ENCODE measurements at regions of chr22 and their contacts with region 1.

Region 1: DNA sequence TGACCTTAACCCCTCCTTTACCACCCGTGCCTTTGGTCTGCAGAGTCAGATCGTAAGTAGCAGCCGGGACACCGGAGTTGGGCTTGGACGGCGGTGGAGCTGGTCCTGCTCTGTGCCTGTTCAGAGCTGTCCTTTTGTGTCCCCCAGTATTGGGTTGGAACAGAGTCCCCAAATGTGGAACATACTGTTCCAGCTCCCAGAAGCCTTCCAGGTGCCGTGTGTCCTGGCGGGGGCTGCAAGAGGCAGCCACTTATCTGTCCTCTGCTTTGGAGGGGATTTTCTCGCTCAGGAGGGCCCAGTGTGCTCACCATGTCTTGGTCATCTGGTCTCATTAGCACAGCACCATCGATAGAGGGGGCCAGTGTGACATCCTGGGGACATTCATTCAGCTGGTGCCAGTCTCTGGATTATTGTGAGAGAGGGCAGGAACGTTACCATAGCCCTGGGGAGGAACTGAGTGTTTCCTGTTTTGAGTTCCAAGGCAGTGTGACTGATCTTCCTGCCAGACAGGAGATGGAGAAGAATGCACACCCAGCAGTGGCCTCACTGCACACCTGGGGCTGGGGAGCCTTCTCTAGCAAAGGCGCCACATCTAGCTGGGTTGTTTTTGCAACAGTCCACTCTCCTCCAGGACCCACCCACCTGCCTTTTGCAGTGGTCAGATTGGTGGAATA is 12.4 kb downstream of the CRELD2 start:
- DNase-seq: peak; percentile 87 to 95
- H3K4me3 ChIP-seq: no peak overlapping the region
- H3K27ac ChIP-seq: no peak overlapping the region
- H3K4me1 ChIP-seq: peaks cover 20% of the 10 kb centered on the region
- H3K27me3 ChIP-seq: no peaks in the 10 kb centered on the region; the same call in 1 of the 2 replicates
- CTCF ChIP-seq: peak; percentile 90

Region 2: GRCh38 chr22:49960159-49961004 is 29.5 kb after region 1 on chr22 and contains the start of gene PIM3:
- CTCF ChIA-PET with region 1: interaction called, 12 read pairs
- POLR2A ChIA-PET with region 1: interaction called, 4 read pairs
- intact Hi-C with region 1: loop called (anchors 1 kb)
- DNase-seq: peak; percentile 95 to 96
- H3K4me3 ChIP-seq: peak within 1 kb of the TSS; percentile 97
- H3K27ac ChIP-seq: peak within 1 kb of the TSS; percentile 66
- H3K4me1 ChIP-seq: peaks cover 36% of the 10 kb centered on the region
- H3K27me3 ChIP-seq: no peaks in the 10 kb centered on the region
- CTCF ChIP-seq: no peak
- total RNA-seq, gene PIM3: 67.0 and 84.8 TPM in 2 replicates

Region 3: GRCh38 chr22:49992921-49993648 is 62.2 kb after region 1 on chr22:
- CTCF ChIA-PET with region 1: interaction called, 3 read pairs
- POLR2A ChIA-PET with region 1: no interaction called
- intact Hi-C with region 1: loop called (anchors 1 kb)
- DNase-seq: peak; percentile 32 to 52
- H3K4me3 ChIP-seq: no peak overlapping the region
- H3K27ac ChIP-seq: no peak overlapping the region
- H3K4me1 ChIP-seq: no peaks in the 10 kb centered on the region; the same call in none of the 2 replicates
- H3K27me3 ChIP-seq: peaks cover 37% of the 10 kb centered on the region
- CTCF ChIP-seq: peak; percentile 87

Region 4: GRCh38 chr22:50148991-50149721 is 218.3 kb after region 1 on chr22:
- CTCF ChIA-PET with region 1: no interaction called
- POLR2A ChIA-PET with region 1: no interaction called
- intact Hi-C with region 1: loop called (anchors 1 kb)
- DNase-seq: peak; percentile 86 to 89
- H3K4me3 ChIP-seq: no peak overlapping the region
- H3K27ac ChIP-seq: no peak overlapping the region
- H3K4me1 ChIP-seq: no peaks in the 10 kb centered on the region
- H3K27me3 ChIP-seq: peaks cover 4% of the 10 kb centered on the region; the same call in 1 of the 2 replicates
- CTCF ChIP-seq: peak; percentile 95

Region 5: DNA sequence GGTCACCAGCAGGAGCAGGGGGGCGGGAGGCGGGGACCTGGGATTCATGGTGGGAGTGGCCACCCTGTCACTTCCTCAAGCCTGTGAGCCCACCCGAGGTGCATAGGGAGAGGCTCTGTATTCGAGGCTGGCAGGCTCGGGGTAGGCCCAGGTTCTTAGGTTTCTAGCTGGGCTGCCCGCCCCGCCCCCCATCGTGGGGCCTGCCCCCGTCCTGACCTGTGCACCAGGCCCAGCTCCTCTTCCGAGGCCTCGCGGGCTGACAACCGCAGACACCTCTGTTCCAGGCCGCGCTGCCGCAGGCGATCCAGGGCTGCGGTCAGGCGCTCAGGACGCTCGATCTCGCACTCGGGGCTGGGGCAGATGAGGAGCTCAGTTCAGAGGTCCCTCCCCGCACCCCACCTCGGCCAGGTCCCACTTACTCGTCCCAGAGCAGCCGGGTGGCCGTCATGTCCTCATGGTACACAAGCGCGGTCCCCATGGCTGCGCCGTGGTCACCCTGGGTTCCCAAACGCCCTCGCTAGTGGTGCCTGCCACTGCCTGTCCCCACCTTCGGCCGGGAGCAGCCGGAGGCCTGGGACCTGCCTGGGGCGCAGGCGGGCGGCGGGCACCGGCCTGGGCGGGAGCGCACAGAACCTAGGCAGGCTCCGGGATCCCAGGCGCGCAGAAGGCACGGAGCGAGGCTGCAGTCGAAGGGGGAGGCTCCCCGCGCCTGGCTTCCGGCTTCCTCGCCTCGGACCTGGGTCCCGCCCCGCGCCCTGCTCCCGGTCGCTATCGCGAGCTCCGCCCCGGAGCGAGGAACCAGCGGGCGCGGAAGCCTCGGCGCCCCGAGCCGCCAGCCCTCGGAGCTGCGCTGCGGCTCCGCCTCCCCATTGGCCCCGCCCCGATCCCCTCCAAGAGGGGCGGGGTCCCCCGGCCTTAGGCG is 319.9 kb after region 1 on chr22 and contains the start of gene HDAC10:
- CTCF ChIA-PET with region 1: interaction called, 12 read pairs
- POLR2A ChIA-PET with region 1: no interaction called
- intact Hi-C with region 1: no loop called
- DNase-seq: peak; percentile 72 to 83
- H3K4me3 ChIP-seq: peak within 1 kb of the TSS; percentile 84
- H3K27ac ChIP-seq: peak within 1 kb of the TSS; percentile 37
- H3K4me1 ChIP-seq: peaks cover 22% of the 10 kb centered on the region
- H3K27me3 ChIP-seq: no peaks in the 10 kb centered on the region
- CTCF ChIP-seq: 0 out of 2 replicates have a peak, but pooled peaks have one; percentile 19
- total RNA-seq, gene HDAC10: 80.5 and 101 TPM in 2 replicates